Gastrocnemius medialis (tissue), 4 donors: ENCODE measurements at regions of chr14 and their contacts with region 1.

Region 1: DNA sequence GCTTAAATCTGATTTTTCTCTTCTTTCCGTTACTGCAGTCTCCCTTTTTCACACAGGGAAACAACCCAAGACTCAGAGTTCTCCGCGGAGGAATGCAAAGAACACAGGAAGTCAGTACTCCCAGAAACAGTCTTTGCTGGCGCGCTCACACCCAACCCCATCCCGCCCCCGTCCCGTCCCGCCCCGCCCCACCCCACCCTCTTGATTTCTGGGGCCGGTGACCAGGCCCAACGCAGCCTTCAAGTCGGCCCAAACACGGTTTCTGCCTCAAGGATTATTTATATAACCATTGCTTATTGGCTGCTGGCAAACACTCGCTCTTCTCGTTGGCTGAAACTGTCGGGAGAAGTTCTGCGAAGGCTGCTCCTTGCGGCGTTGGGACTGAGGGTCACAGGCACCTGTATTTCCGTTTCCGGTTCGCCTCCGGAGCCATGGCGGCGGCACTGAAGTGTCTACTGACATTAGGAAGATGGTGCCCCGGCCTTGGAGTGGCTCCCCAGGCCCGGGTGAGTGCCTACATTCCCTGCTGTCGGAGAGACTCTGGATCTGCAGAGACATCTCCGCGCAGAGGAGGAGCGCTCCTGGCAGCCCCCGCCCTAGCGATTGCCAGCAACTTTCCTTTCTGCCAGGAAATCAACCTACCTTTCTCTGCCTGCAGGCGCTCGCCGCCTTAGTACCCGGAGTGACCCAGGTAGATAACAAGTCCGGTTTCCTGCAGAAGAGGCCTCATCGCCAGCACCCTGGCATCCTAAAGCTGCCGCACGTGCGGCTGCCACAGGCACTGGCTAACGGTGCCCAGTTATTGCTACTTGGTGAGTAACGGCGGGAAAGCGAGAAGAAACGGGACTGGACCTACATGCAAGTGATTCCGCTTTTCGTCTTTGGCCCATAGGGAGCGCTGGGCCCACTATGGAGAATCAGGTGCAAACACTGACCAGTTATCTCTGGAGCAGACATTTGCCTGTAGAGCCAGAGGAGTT is at the start of gene METTL17:
- DNase-seq: peak; percentile 87 to 95
- ATAC-seq: peak; percentile 98
- H3K4me3 ChIP-seq: peak within 1 kb of the TSS; percentile 72 to 99 (median 97)
- H3K27ac ChIP-seq: peak within 1 kb of the TSS; percentile 73 to 89 (median 81)
- H3K4me1 ChIP-seq: peaks cover 17 to 20% of the 10 kb centered on the region in 2 donors
- H3K27me3 ChIP-seq: no peaks in the 10 kb centered on the region
- CTCF ChIP-seq: peak in 1 of 5 experiments; percentile 10
- POLR2A ChIP-seq: peak; percentile 10 to 57
- total RNA-seq, gene METTL17: 33.9 to 69.5 (median 50.8) TPM

Region 2: GRCh38 chr14:20332788-20333493 is 656.9 kb before region 1 on chr14 and contains the start of gene CCNB1IP1:
- in situ Hi-C with region 1: loop called in 2 of 4 experiments (anchors 25 kb)
- intact Hi-C with region 1: loop called (anchors 10 kb)
- DNase-seq: peak; percentile 62 to 68
- ATAC-seq: peak; percentile 100
- H3K4me3 ChIP-seq: peak within 1 kb of the TSS; percentile 61 to 77 (median 70)
- H3K27ac ChIP-seq: peak within 1 kb of the TSS; percentile 85 to 91 (median 88)
- H3K4me1 ChIP-seq: peaks cover 10 to 16% of the 10 kb centered on the region in 2 donors
- H3K27me3 ChIP-seq: no peaks in the 10 kb centered on the region
- CTCF ChIP-seq: no peak
- POLR2A ChIP-seq: peak; percentile 62 to 63
- total RNA-seq, gene CCNB1IP1: 15.7 to 42.9 (median 30.2) TPM

Region 3: GRCh38 chr14:20578784-20579502 is 410.9 kb before region 1 on chr14:
- in situ Hi-C with region 1: no loop called
- intact Hi-C with region 1: no loop called
- DNase-seq: no peak
- ATAC-seq: no peak
- H3K4me3 ChIP-seq: no peak overlapping the region
- H3K27ac ChIP-seq: no peak overlapping the region
- H3K4me1 ChIP-seq: no peaks in the 10 kb centered on the region
- H3K27me3 ChIP-seq: no peaks in the 10 kb centered on the region
- CTCF ChIP-seq: no peak
- POLR2A ChIP-seq: no peak

Region 4: GRCh38 chr14:21039585-21040369 is 49.9 kb after region 1 on chr14:
- in situ Hi-C with region 1: no loop called
- intact Hi-C with region 1: no loop called
- DNase-seq: peak in 1 of 2 donors; percentile 72
- ATAC-seq: peak; percentile 53 to 68
- H3K4me3 ChIP-seq: peak overlapping the region in 2 of 4 donors; percentile 19 to 26
- H3K27ac ChIP-seq: peak overlapping the region; percentile 83 to 91 (median 86)
- H3K4me1 ChIP-seq: peaks cover 62 to 75% of the 10 kb centered on the region in 2 donors
- H3K27me3 ChIP-seq: no peaks in the 10 kb centered on the region
- CTCF ChIP-seq: peak; percentile 77 to 84 (median 79)
- POLR2A ChIP-seq: peak in 1 of 2 donors; percentile 1

Region 5: DNA sequence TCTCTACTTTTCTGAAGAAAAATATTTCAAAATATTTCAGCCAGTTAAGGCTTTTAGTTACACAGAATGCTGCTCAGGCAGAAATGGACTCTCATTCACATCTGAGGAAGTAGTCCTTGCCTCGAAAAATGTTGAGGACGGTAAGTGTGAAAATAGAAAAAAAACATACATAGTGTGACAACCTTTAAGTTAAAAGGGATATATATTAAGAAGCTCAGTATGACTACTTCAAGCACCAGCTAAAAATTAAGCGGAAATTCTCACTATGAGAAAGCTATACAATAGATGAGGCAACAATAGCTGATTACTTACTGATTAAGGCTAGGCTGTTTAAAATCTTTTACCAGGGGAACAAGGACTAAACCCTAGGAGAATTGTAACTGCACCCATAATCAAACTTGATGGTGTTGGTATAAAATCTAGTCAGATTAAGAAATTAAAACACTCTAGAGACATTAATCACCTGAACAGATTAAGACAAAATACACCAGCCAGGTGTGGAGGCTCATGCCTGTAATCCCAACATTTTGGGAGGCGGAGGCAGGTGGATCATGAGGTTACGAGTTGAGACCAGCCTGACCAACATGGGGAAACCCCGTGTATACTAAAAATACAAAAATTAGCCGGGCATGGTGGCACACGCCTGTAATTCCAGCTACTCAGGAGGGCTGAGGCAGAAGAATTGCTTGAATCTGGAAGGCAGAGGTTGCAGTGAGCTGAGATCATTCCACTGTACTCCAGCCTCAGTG is 225.4 kb after region 1 on chr14:
- in situ Hi-C with region 1: no loop called
- intact Hi-C with region 1: loop called (anchors 10 kb)
- DNase-seq: no peak
- ATAC-seq: no peak
- H3K4me3 ChIP-seq: no peak overlapping the region
- H3K27ac ChIP-seq: peak overlapping the region in 1 of 4 donors; percentile 13
- H3K4me1 ChIP-seq: peaks cover 21 to 29% of the 10 kb centered on the region in 2 donors
- H3K27me3 ChIP-seq: no peaks in the 10 kb centered on the region
- CTCF ChIP-seq: no peak
- POLR2A ChIP-seq: no peak